CD4-positive, alpha-beta memory T cell (primary cell): ENCODE measurements at regions of chr16 and their contacts with region 1.

Region 1: GRCh38 chr16:67546761-67547422 is 15.4 kb upstream of the CTCF start:
- DNase-seq: peak; percentile 66 to 73 (median 69)
- H3K4me3 ChIP-seq: peak overlapping the region; percentile 41 to 48
- H3K4me3 Mint-ChIP-seq: peak overlapping the region; percentile 58 to 91 (median 82)
- H3K27ac ChIP-seq: peak overlapping the region; percentile 42
- H3K27ac Mint-ChIP-seq: peak overlapping the region; percentile 60 to 96 (median 95)
- H3K4me1 ChIP-seq: peaks cover 43% of the 10 kb centered on the region
- H3K4me1 Mint-ChIP-seq: peaks cover 29 to 65% (median 38%) of the 10 kb centered on the region in 4 donors
- H3K27me3 ChIP-seq: no peaks in the 10 kb centered on the region
- H3K27me3 Mint-ChIP-seq: no peaks in the 10 kb centered on the region

Region 2: DNA sequence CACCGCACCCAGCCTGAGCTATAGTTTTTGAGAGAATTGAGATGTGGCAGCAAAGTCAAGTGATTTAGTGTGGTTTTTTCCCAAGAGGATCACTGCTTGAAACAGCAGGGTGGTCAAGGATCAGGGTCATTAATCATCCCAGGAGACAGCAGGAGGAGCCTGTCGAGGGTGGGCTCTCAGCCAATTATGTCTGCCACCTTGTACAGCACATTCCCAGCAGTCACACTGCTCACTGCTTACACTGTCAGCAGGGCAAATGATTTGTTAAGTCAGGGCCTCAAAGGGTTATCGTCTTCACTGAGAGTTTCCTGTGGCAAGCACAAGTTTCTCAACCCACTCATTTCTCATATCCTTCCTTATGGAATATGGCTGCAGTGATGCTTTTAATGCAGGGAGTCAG is 409.3 kb before region 1 on chr16:
- CTCF ChIA-PET with region 1: no interaction called
- POLR2A ChIA-PET with region 1: no interaction called
- intact Hi-C with region 1: no loop called
- DNase-seq: no peak
- H3K4me3 ChIP-seq: no peak overlapping the region
- H3K4me3 Mint-ChIP-seq: no peak overlapping the region
- H3K27ac ChIP-seq: no peak overlapping the region
- H3K27ac Mint-ChIP-seq: peak overlapping the region in 2 of 7 donors; percentile 29 to 61
- H3K4me1 ChIP-seq: no peaks in the 10 kb centered on the region
- H3K4me1 Mint-ChIP-seq: no peaks in the 10 kb centered on the region
- H3K27me3 ChIP-seq: no peaks in the 10 kb centered on the region
- H3K27me3 Mint-ChIP-seq: no peaks in the 10 kb centered on the region

Region 3: DNA sequence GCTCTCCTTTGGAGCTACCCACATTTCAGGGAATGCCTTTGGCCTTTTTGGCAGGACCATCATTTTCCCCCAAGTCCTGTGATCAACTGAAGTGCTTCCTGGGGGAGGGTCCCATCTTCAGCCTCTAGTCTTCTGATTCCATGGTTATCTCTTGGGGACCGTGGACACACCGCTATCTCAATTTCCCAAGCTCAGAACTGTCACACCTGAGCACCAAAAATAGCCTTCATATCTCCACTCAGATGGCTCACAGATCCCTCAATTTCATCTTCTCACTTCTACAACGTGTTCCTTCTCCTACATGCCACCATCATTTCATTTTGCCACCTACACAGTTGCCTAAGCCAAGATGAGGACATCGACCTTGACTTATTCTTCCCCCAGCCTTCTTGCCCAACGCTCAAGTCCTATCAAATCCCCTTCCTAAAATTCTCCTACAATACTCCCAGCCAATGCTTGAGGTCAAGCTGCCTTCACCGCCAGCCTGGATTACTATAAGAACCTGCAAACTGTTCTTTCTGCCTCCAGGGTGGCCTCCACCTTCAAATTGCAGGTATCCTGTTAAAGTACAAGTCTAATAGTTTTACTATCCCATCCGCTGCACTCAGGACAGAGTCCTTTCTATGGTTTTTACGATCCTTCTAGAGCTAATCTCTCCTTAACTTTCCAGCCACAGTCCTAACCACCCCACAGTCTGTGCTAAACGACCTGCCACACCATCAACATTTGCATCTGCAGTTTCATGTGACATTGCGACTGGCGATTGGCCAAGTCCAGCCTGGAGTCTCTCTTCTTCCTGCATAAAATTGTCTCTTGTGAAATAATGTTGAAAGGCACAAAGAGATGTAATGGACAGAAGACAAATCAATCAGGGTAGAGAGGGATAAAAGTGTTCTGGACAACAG is 72.1 kb before region 1 on chr16:
- CTCF ChIA-PET with region 1: no interaction called
- POLR2A ChIA-PET with region 1: no interaction called
- intact Hi-C with region 1: no loop called
- DNase-seq: no peak
- H3K4me3 ChIP-seq: no peak overlapping the region
- H3K4me3 Mint-ChIP-seq: peak overlapping the region in 1 of 8 donors; percentile 24
- H3K27ac ChIP-seq: no peak overlapping the region
- H3K27ac Mint-ChIP-seq: peak overlapping the region in 4 of 7 donors; percentile 0 to 77 (median 22)
- H3K4me1 ChIP-seq: peaks cover 25% of the 10 kb centered on the region
- H3K4me1 Mint-ChIP-seq: peaks cover 36 to 66% (median 53%) of the 10 kb centered on the region in 4 donors
- H3K27me3 ChIP-seq: no peaks in the 10 kb centered on the region
- H3K27me3 Mint-ChIP-seq: no peaks in the 10 kb centered on the region

Region 4: GRCh38 chr16:67530013-67530939 is 16.6 kb before region 1 on chr16:
- CTCF ChIA-PET with region 1: interaction called, 27 read pairs
- POLR2A ChIA-PET with region 1: interaction called, 18 read pairs
- intact Hi-C with region 1: no loop called
- DNase-seq: peak in 1 of 5 donors; percentile 55
- H3K4me3 ChIP-seq: peak overlapping the region in 1 of 2 donors; percentile 50
- H3K4me3 Mint-ChIP-seq: peak overlapping the region; percentile 73 to 87 (median 80)
- H3K27ac ChIP-seq: no peak overlapping the region
- H3K27ac Mint-ChIP-seq: peak overlapping the region in 2 of 7 donors; percentile 58 to 70
- H3K4me1 ChIP-seq: peaks cover 28% of the 10 kb centered on the region
- H3K4me1 Mint-ChIP-seq: peaks cover 6 to 38% (median 24%) of the 10 kb centered on the region in 4 donors
- H3K27me3 ChIP-seq: peaks cover 7% of the 10 kb centered on the region
- H3K27me3 Mint-ChIP-seq: peaks cover 4 to 14% of the 10 kb centered on the region in 2 donors

Region 5: GRCh38 chr16:67595033-67595355 is 48.1 kb after region 1 on chr16:
- CTCF ChIA-PET with region 1: interaction called, 23 read pairs
- POLR2A ChIA-PET with region 1: interaction called, 4 read pairs
- intact Hi-C with region 1: no loop called
- DNase-seq: no peak
- H3K4me3 ChIP-seq: no peak overlapping the region
- H3K4me3 Mint-ChIP-seq: no peak overlapping the region
- H3K27ac ChIP-seq: no peak overlapping the region
- H3K27ac Mint-ChIP-seq: peak overlapping the region in 6 of 7 donors; percentile 2 to 86 (median 52)
- H3K4me1 ChIP-seq: peaks cover 28% of the 10 kb centered on the region
- H3K4me1 Mint-ChIP-seq: peaks cover 35 to 66% (median 41%) of the 10 kb centered on the region in 4 donors
- H3K27me3 ChIP-seq: no peaks in the 10 kb centered on the region
- H3K27me3 Mint-ChIP-seq: no peaks in the 10 kb centered on the region

Region 6: DNA sequence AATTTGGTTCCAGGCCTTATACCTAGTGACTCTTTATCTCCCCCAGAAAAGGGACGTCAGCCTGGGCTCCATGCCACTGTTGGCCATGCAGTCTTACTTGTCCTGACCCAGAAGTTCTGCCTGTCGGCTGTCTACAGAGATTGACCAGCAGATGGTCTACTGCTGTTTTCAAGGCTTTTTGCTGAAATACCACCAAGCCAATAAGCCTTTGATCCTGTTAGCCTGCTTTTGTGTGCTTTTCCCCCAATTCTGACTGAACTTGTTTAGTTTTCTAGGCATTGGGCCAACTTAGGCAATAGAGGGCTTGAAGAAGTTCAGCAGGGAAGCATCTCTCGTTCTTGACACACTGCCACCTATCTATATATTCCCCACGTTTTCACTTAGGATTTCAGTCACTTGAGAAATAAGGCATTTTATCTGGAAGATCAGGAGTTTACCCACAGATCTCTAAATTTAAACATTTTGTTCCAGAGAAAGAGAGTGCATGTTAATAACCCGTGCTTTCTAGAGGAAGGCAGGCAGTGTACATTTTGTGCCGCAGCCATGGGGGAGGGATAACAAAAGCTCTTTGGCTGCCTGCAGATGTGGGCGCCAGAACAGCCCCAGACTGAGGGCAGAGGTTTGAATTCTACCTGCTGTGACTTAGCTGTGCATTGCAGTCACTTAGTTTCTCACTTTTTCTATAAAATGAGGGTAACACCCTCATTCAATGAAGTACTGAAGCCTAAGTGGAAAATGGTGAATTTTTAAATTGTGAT is 85.7 kb after region 1 on chr16:
- CTCF ChIA-PET with region 1: interaction called, 12 read pairs
- POLR2A ChIA-PET with region 1: interaction called, 6 read pairs
- intact Hi-C with region 1: no loop called
- DNase-seq: no peak
- H3K4me3 ChIP-seq: no peak overlapping the region
- H3K4me3 Mint-ChIP-seq: no peak overlapping the region
- H3K27ac ChIP-seq: no peak overlapping the region
- H3K27ac Mint-ChIP-seq: peak overlapping the region in 2 of 7 donors; percentile 80 to 86
- H3K4me1 ChIP-seq: no peaks in the 10 kb centered on the region
- H3K4me1 Mint-ChIP-seq: peaks cover 0 to 5% (median 0%) of the 10 kb centered on the region in 4 donors
- H3K27me3 ChIP-seq: no peaks in the 10 kb centered on the region
- H3K27me3 Mint-ChIP-seq: no peaks in the 10 kb centered on the region

Region 7: GRCh38 chr16:67653128-67653786 is 106.4 kb after region 1 on chr16:
- CTCF ChIA-PET with region 1: interaction called, 329 read pairs
- POLR2A ChIA-PET with region 1: interaction called, 37 read pairs
- intact Hi-C with region 1: no loop called
- DNase-seq: no peak
- H3K4me3 ChIP-seq: no peak overlapping the region
- H3K4me3 Mint-ChIP-seq: no peak overlapping the region
- H3K27ac ChIP-seq: no peak overlapping the region
- H3K27ac Mint-ChIP-seq: no peak overlapping the region
- H3K4me1 ChIP-seq: no peaks in the 10 kb centered on the region
- H3K4me1 Mint-ChIP-seq: peaks cover 8 to 23% (median 10%) of the 10 kb centered on the region in 4 donors
- H3K27me3 ChIP-seq: no peaks in the 10 kb centered on the region
- H3K27me3 Mint-ChIP-seq: no peaks in the 10 kb centered on the region